ENCODE measurements at regions of chr6 and their contacts with region 1.

Region 1: GRCh38 chr6:33271458-33272274 is at the starts of genes RPS18 and VPS52:
- DNase-seq: peak; percentile 96
- H3K4me3 ChIP-seq: peak within 1 kb of the TSS; percentile 65 to 91
- H3K27ac ChIP-seq: peak within 1 kb of the TSS; percentile 83 to 93
- H3K4me1 ChIP-seq: peaks cover 28% of the 10 kb centered on the region
- H3K27me3 ChIP-seq: no peaks in the 10 kb centered on the region
- CTCF ChIP-seq: peak in 2 of 4 experiments; percentile 15 to 18
- POLR2A ChIP-seq: peak; percentile 95
- total RNA-seq, gene RPS18: 1,990 to 4,594 TPM
- total RNA-seq, gene VPS52: 42.2 to 55.0 TPM

Region 2: GRCh38 chr6:33299237-33299944 is 27.7 kb after region 1 on chr6:
- intact Hi-C with region 1: loop called (anchors 2 kb)
- DNase-seq: peak; percentile 88
- H3K4me3 ChIP-seq: peak overlapping the region; percentile 64 to 70
- H3K27ac ChIP-seq: peak overlapping the region; percentile 95 to 96
- H3K4me1 ChIP-seq: peaks cover 2% of the 10 kb centered on the region
- H3K27me3 ChIP-seq: no peaks in the 10 kb centered on the region
- CTCF ChIP-seq: peak; percentile 40 to 78 (median 76)
- POLR2A ChIP-seq: peak; percentile 51

Region 3: GRCh38 chr6:33445119-33445603 is 173.5 kb after region 1 on chr6:
- intact Hi-C with region 1: no loop called
- DNase-seq: no peak
- H3K4me3 ChIP-seq: no peak overlapping the region
- H3K27ac ChIP-seq: no peak overlapping the region
- H3K4me1 ChIP-seq: no peaks in the 10 kb centered on the region
- H3K27me3 ChIP-seq: no peaks in the 10 kb centered on the region
- CTCF ChIP-seq: no peak
- POLR2A ChIP-seq: no peak